ENCODE measurements at regions of chr2 and their contacts with region 1.

Region 1: GRCh38 chr2:201257956-201258665 is 2.2 kb upstream of the CASP8 start:
- DNase-seq: peak; percentile 94
- H3K4me3 ChIP-seq: peak overlapping the region; percentile 34 to 72 (median 52)
- H3K27ac ChIP-seq: peak overlapping the region; percentile 79 to 97 (median 94)
- H3K4me1 ChIP-seq: peaks cover 33 to 100% (median 89%) of the 10 kb centered on the region in 6 donors
- H3K27me3 ChIP-seq: no peaks in the 10 kb centered on the region
- CTCF ChIP-seq: peak in 2 of 11 experiments; percentile 2 to 28
- POLR2A ChIP-seq: peak in 1 of 3 donors; percentile 1

Region 2: GRCh38 chr2:200159829-200160781 is 1098.0 kb before region 1 on chr2:
- intact Hi-C with region 1: no loop called
- DNase-seq: no peak
- H3K4me3 ChIP-seq: no peak overlapping the region
- H3K27ac ChIP-seq: no peak overlapping the region
- H3K4me1 ChIP-seq: peaks cover 0 to 4% (median 0%) of the 10 kb centered on the region in 6 donors
- H3K27me3 ChIP-seq: no peaks in the 10 kb centered on the region
- CTCF ChIP-seq: no peak
- POLR2A ChIP-seq: no peak

Region 3: GRCh38 chr2:201451292-201452057 is 193.4 kb after region 1 on chr2 and contains the starts of genes STRADB and TRAK2:
- intact Hi-C with region 1: loop called (anchors 10 kb)
- DNase-seq: peak; percentile 99
- H3K4me3 ChIP-seq: peak within 1 kb of the TSS; percentile 51 to 87 (median 78)
- H3K27ac ChIP-seq: peak within 1 kb of the TSS; percentile 83 to 95 (median 92)
- H3K4me1 ChIP-seq: peaks cover 20 to 64% (median 45%) of the 10 kb centered on the region in 6 donors
- H3K27me3 ChIP-seq: no peaks in the 10 kb centered on the region
- CTCF ChIP-seq: peak in 10 of 11 experiments; percentile 17 to 67 (median 38)
- POLR2A ChIP-seq: peak in 2 of 3 donors; percentile 81 to 88
- total RNA-seq, gene STRADB: 13.4 to 45.3 (median 26.6) TPM
- total RNA-seq, gene TRAK2: 36.0 to 63.0 (median 44.5) TPM